ENCODE measurements at regions of chr12 and their contacts with region 1.

Region 1: GRCh38 chr12:133080368-133081158 is at the start of gene ZNF140:
- DNase-seq: peak; percentile 91 to 97 (median 96)
- ATAC-seq: peak; percentile 77
- H3K4me3 ChIP-seq: peak within 1 kb of the TSS; percentile 94
- H3K4me3 Mint-ChIP-seq: no peak within 1 kb of the TSS
- H3K27ac ChIP-seq: peak within 1 kb of the TSS; percentile 100
- H3K27ac Mint-ChIP-seq: peak within 1 kb of the TSS in 1 of 9 donors; percentile 41
- H3K4me1 ChIP-seq: peaks cover 7 to 11% of the 10 kb centered on the region in 2 donors
- H3K4me1 Mint-ChIP-seq: peaks cover 0 to 22% (median 10%) of the 10 kb centered on the region in 7 donors
- H3K27me3 ChIP-seq: no peaks in the 10 kb centered on the region
- H3K27me3 Mint-ChIP-seq: no peaks in the 10 kb centered on the region
- total RNA-seq, gene ZNF140: 11.2 to 29.9 (median 16.0) TPM

Region 2: DNA sequence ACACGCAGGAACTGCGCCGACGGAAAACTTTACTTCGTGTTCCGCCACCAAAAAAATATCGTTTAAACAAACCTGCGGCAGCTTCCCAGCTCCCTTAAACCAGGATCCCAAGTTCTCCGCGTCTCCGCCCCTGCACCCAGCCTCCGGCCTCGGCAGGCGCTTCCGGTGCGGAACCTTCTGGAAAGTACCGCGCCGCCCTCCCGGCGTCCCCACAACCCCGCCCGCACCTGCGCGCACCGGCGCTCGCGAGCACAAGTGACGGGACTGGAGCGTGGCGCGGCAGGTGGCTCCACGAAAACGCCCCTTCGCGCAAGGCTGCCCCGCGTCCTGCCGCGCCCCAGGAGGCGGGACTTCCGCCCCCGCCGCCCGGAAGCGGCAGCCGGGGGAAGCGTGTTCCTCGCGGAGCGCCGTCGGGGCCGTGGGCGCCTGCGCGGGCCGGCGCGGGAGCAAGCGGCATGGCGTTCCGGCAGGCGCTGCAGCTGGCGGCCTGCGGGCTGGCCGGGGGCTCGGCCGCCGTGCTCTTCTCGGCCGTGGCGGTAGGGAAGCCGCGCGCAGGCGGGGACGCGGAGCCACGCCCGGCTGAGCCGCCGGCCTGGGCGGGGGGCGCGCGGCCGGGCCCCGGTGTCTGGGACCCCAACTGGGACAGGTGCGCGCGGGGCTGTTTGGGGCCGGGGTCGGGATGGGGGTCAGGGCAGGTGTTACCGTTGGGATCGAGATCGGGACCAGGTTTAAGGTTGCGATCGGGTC is 370.0 kb before region 1 on chr12 and contains the start of gene PGAM5:
- CTCF ChIA-PET with region 1: no interaction called
- POLR2A ChIA-PET with region 1: no interaction called
- intact Hi-C with region 1: loop called in 1 of 2 experiments (anchors 1 kb)
- DNase-seq: peak; percentile 91 to 97 (median 95)
- ATAC-seq: peak; percentile 98
- H3K4me3 ChIP-seq: peak within 1 kb of the TSS; percentile 62
- H3K4me3 Mint-ChIP-seq: peak within 1 kb of the TSS; percentile 84 to 98 (median 88)
- H3K27ac ChIP-seq: peak within 1 kb of the TSS; percentile 92
- H3K27ac Mint-ChIP-seq: peak within 1 kb of the TSS; percentile 87 to 96 (median 92)
- H3K4me1 ChIP-seq: peaks cover 6 to 11% of the 10 kb centered on the region in 2 donors
- H3K4me1 Mint-ChIP-seq: peaks cover 0 to 36% (median 22%) of the 10 kb centered on the region in 7 donors
- H3K27me3 ChIP-seq: no peaks in the 10 kb centered on the region
- H3K27me3 Mint-ChIP-seq: no peaks in the 10 kb centered on the region
- total RNA-seq, gene PGAM5: 19.3 to 51.7 (median 21.4) TPM

Region 3: GRCh38 chr12:132828706-132829534 is 251.6 kb before region 1 on chr12 and contains the start of gene GOLGA3:
- CTCF ChIA-PET with region 1: interaction called, 5 read pairs
- POLR2A ChIA-PET with region 1: no interaction called
- intact Hi-C with region 1: loop called in 1 of 2 experiments (anchors 1 kb)
- DNase-seq: peak; percentile 92 to 98 (median 95)
- ATAC-seq: peak; percentile 96
- H3K4me3 ChIP-seq: peak within 1 kb of the TSS; percentile 95
- H3K4me3 Mint-ChIP-seq: peak within 1 kb of the TSS; percentile 92 to 98 (median 96)
- H3K27ac ChIP-seq: peak within 1 kb of the TSS; percentile 99
- H3K27ac Mint-ChIP-seq: peak within 1 kb of the TSS; percentile 98 to 100 (median 100)
- H3K4me1 ChIP-seq: peaks cover 8 to 25% of the 10 kb centered on the region in 2 donors
- H3K4me1 Mint-ChIP-seq: peaks cover 28 to 69% (median 58%) of the 10 kb centered on the region in 7 donors
- H3K27me3 ChIP-seq: no peaks in the 10 kb centered on the region
- H3K27me3 Mint-ChIP-seq: peaks cover 0 to 3% (median 0%) of the 10 kb centered on the region in 5 donors
- total RNA-seq, gene GOLGA3: 46.3 to 65.7 (median 63.6) TPM

Region 4: DNA sequence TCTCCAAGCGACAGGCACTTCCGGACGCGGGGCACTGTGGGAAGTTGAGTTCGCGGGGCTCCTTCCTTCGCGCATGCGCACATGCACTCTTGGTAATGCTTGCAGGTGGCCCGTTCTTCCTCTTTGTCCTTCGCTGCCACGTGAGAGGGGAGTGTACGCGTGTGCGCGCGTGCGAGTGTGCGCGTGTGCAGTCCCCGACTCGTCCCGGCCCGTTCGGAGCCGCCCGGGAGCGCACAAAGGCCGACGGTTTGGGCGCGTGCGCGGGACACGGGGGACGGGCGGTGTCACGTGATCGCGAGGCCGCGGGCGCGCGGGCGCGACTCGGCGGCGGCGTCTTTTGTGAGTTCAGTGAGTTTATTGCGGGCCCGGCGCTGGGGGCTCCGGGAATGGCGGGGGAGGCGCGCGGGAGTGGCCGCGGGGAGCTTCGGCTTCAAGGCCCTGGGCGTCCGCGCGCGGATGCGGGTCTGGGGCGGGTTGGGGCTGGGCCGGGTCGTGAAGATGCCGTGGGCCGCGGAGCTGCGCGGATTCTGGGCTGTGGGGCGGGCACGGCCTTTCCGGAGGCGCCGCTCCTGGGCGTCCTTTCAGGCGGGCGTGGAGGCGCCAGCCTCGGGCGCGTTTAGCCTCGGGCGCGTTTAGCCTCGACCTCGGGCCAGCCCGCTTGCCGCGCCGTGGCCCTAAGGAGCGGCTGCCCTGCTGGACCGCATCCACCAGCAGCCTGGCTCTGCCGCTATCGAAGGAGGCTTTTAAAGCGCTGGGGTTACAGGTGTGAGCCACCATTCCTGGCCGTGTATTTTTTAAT is 43.2 kb before region 1 on chr12 and contains the start of gene ZNF84:
- CTCF ChIA-PET with region 1: no interaction called
- POLR2A ChIA-PET with region 1: interaction called, 4 read pairs
- intact Hi-C with region 1: loop called (anchors 1 kb)
- DNase-seq: peak; percentile 93 to 99 (median 97)
- ATAC-seq: peak; percentile 96
- H3K4me3 ChIP-seq: peak within 1 kb of the TSS; percentile 65
- H3K4me3 Mint-ChIP-seq: peak within 1 kb of the TSS; percentile 78 to 96 (median 94)
- H3K27ac ChIP-seq: peak within 1 kb of the TSS; percentile 94
- H3K27ac Mint-ChIP-seq: peak within 1 kb of the TSS; percentile 87 to 99 (median 94)
- H3K4me1 ChIP-seq: peaks cover 0 to 4% of the 10 kb centered on the region in 2 donors
- H3K4me1 Mint-ChIP-seq: peaks cover 0 to 37% (median 13%) of the 10 kb centered on the region in 7 donors
- H3K27me3 ChIP-seq: no peaks in the 10 kb centered on the region
- H3K27me3 Mint-ChIP-seq: peaks cover 0 to 9% (median 3%) of the 10 kb centered on the region in 5 donors
- total RNA-seq, gene ZNF84: 27.4 to 52.7 (median 31.6) TPM

Region 5: GRCh38 chr12:133181238-133181959 is 100.8 kb after region 1 on chr12 and contains the start of gene ZNF268:
- CTCF ChIA-PET with region 1: interaction called, 4 read pairs
- POLR2A ChIA-PET with region 1: interaction called, 26 read pairs
- intact Hi-C with region 1: loop called (anchors 1 kb)
- DNase-seq: peak; percentile 75 to 90 (median 86)
- ATAC-seq: peak; percentile 99
- H3K4me3 ChIP-seq: peak within 1 kb of the TSS; percentile 100
- H3K4me3 Mint-ChIP-seq: peak within 1 kb of the TSS; percentile 90 to 99 (median 95)
- H3K27ac ChIP-seq: peak within 1 kb of the TSS; percentile 84
- H3K27ac Mint-ChIP-seq: peak within 1 kb of the TSS; percentile 85 to 97 (median 92)
- H3K4me1 ChIP-seq: peaks cover 7 to 9% of the 10 kb centered on the region in 2 donors
- H3K4me1 Mint-ChIP-seq: peaks cover 16 to 34% (median 31%) of the 10 kb centered on the region in 7 donors
- H3K27me3 ChIP-seq: no peaks in the 10 kb centered on the region
- H3K27me3 Mint-ChIP-seq: no peaks in the 10 kb centered on the region
- total RNA-seq, gene ZNF268: 13.6 to 38.6 (median 18.6) TPM